Activated T-helper 2 cell treated with anti-CD3 and anti-CD28 coated beads, Interferon-gamma antibody, Interleukin-2, Interleukin-4, amounts not matched to agents 10 μg/mL and 5 μg/mL and 100 μg/mL, durations not matched to agents 14 hours and 24 hours and 36 hours (primary cell): ENCODE measurements at regions of chr2 and their contacts with region 1.

Region 1: GRCh38 chr2:222813177-222813843 is 47.5 kb upstream of the ACSL3 start:
- DNase-seq: no peak
- H3K4me3 Mint-ChIP-seq: peak overlapping the region; percentile 23
- H3K27ac Mint-ChIP-seq: peak overlapping the region; percentile 94
- H3K4me1 Mint-ChIP-seq: peaks cover 24% of the 10 kb centered on the region
- H3K27me3 Mint-ChIP-seq: no peaks in the 10 kb centered on the region

Region 2: GRCh38 chr2:222747526-222748160 is 65.7 kb before region 1 on chr2:
- intact Hi-C with region 1: loop called (anchors 1 kb)
- DNase-seq: no peak
- H3K4me3 Mint-ChIP-seq: no peak overlapping the region
- H3K27ac Mint-ChIP-seq: no peak overlapping the region
- H3K4me1 Mint-ChIP-seq: peaks cover 45% of the 10 kb centered on the region
- H3K27me3 Mint-ChIP-seq: peaks cover 2% of the 10 kb centered on the region

Region 3: GRCh38 chr2:222797261-222797660 is 16.0 kb before region 1 on chr2:
- intact Hi-C with region 1: loop called (anchors 1 kb)
- DNase-seq: no peak
- H3K4me3 Mint-ChIP-seq: no peak overlapping the region
- H3K27ac Mint-ChIP-seq: no peak overlapping the region
- H3K4me1 Mint-ChIP-seq: peaks cover 2% of the 10 kb centered on the region
- H3K27me3 Mint-ChIP-seq: peaks cover 4% of the 10 kb centered on the region

Region 4: DNA sequence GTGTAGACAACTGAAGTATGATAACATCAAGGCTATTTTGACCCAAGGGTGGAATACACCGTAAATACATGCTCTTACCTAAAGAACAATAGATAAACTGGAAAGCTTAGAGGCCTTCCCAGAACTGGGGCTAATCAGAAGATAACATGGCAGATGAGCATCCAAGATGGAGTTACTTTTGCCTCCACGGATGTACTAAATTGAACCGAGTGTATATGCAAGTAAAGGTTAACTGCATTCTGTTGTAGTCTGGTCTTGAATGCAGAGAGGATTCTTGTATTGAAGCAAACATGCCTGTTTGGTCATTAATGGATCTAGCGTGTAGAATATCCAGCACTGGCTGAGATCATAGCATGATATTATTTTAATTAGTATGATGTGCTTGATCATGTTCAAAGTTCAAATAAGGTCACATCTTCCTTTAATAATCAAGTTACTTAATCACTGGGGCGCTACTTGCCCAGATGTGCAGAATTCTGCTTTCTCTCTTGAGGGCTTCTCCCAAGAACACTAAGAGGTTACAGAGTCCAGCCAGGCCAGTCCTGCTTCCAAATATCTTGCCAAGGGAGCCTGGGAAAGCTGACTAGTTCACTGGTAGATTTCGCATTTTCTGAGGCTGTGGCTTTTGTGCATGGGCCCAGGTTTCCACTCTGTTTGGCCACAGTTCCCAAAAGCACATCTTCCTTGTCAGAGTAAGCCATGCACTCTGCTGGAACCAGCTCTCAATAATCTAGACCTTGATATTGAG is 10.0 kb after region 1 on chr2:
- intact Hi-C with region 1: no loop called
- DNase-seq: no peak
- H3K4me3 Mint-ChIP-seq: no peak overlapping the region
- H3K27ac Mint-ChIP-seq: no peak overlapping the region
- H3K4me1 Mint-ChIP-seq: peaks cover 10% of the 10 kb centered on the region
- H3K27me3 Mint-ChIP-seq: peaks cover 11% of the 10 kb centered on the region

Region 5: GRCh38 chr2:222860740-222861410 is 47.6 kb after region 1 on chr2 and contains the start of gene ACSL3:
- intact Hi-C with region 1: loop called (anchors 1 kb)
- DNase-seq: peak; percentile 93
- H3K4me3 Mint-ChIP-seq: peak within 1 kb of the TSS; percentile 76
- H3K27ac Mint-ChIP-seq: peak within 1 kb of the TSS; percentile 86
- H3K4me1 Mint-ChIP-seq: peaks cover 9% of the 10 kb centered on the region
- H3K27me3 Mint-ChIP-seq: peaks cover 11% of the 10 kb centered on the region
- total RNA-seq, gene ACSL3: 72.5 and 74.0 TPM in 2 replicates